ENCODE measurements at regions of chr16 and their contacts with region 1.

Region 1: DNA sequence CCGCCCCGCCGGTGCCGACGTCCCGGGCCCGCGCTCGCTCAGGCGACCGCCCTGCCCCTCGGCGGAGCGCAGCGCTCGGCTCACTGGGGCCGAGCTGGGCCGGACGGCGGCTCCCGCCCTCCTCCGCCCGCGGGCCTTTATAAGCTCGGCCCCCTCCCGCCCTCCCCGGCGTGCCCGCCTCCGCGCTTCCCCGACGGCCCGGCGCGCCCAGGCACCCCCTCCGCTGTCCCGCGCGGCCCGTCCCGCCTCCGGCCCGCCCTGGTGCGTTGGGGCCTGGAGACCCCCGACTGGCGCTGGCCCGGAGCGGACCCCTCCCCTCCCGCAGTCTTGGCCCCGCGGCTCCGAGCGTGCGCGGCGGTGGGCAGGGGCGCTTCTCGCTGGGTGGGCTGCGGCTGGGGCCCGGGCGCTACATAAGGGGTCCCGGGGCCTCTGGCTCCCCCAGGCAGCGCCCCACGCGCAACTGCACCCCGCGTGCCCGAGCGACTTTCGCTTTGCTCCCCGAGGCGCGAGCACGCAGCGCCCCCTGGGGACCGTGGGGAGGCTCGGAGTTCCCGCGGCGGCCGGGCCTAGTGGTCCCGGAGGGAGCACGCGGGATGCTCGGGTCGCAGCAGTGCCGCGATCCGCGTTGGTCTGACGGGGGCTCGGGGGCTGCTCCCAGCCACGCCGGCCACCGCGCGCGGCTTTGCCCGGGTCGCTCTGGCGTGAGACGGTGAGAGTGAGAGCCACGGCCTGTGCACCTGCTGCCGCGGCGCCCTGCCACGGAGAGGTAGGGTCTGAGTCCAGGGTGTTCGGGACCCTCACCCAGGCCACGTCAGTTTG is at the start of gene PIEZO1:
- DNase-seq: peak; percentile 73 to 94 (median 86)
- ATAC-seq: peak; percentile 50
- H3K4me3 ChIP-seq: peak within 1 kb of the TSS; percentile 63
- H3K4me3 Mint-ChIP-seq: peak within 1 kb of the TSS; percentile 89
- H3K27ac ChIP-seq: peak within 1 kb of the TSS; percentile 75 to 77
- H3K27ac Mint-ChIP-seq: peak within 1 kb of the TSS; percentile 55
- H3K4me1 ChIP-seq: peaks cover 57% of the 10 kb centered on the region
- H3K4me1 Mint-ChIP-seq: peaks cover 47% of the 10 kb centered on the region
- H3K27me3 ChIP-seq: no peaks in the 10 kb centered on the region
- H3K27me3 Mint-ChIP-seq: no peaks in the 10 kb centered on the region
- CTCF ChIP-seq: peak; percentile 98
- total RNA-seq, gene PIEZO1: 142 to 146 TPM

Region 2: DNA sequence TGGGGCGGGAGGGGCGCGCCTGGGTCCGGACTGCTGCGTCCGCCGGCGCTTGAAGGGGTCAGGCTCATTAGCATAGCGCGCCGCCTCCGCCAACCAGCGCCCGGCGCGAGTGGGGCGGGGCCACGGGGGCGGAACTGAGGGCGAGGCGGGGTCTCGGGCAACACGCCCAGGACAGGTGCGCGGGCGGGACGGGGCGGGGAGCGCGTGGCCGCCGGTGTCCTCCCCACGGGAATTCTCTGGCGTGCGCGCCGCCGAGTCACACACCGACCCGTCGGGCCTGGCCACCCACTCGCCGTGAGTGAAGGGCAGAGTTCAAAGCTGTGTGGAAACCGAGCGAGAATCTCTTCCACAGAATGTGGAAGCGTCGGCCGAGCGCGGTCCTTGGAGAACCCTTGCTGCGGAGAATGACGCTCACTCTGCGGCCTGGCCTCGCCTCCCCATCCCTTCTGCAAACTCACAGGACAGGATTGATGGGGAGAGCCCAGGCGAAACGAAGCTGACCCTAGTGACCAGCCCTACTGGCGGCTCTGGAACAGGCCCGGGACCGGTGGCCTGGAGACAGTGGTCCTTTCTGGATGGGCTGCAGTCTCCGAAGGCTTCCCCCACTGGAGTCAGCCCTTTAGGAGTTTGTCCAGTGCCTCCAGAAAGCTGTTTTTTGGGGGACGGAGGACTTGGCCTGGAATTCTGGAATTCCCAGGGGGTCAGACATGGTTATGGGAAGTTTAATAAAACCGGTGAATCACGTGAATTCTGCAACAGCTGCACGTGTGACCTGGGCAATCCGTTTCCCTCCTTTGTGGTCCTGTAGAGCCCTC is 98.7 kb before region 1 on chr16 and contains the start of gene SNAI3:
- CTCF ChIA-PET with region 1: interaction called, 3 read pairs
- POLR2A ChIA-PET with region 1: interaction called, 3 read pairs
- intact Hi-C with region 1: loop called in 1 of 2 experiments (anchors 1 kb)
- DNase-seq: peak; percentile 63 to 90 (median 80)
- ATAC-seq: peak; percentile 78
- H3K4me3 ChIP-seq: peak within 1 kb of the TSS; percentile 77
- H3K4me3 Mint-ChIP-seq: peak within 1 kb of the TSS; percentile 87
- H3K27ac ChIP-seq: peak within 1 kb of the TSS; percentile 29 to 56
- H3K27ac Mint-ChIP-seq: peak within 1 kb of the TSS; percentile 80
- H3K4me1 ChIP-seq: peaks cover 80% of the 10 kb centered on the region
- H3K4me1 Mint-ChIP-seq: peaks cover 58% of the 10 kb centered on the region
- H3K27me3 ChIP-seq: no peaks in the 10 kb centered on the region
- H3K27me3 Mint-ChIP-seq: no peaks in the 10 kb centered on the region
- CTCF ChIP-seq: no peak
- total RNA-seq, gene SNAI3: 3.0 to 3.5 TPM

Region 3: GRCh38 chr16:88706288-88706964 is 78.9 kb before region 1 on chr16 and contains the starts of genes CTU2 and RNF166:
- CTCF ChIA-PET with region 1: interaction called, 3 read pairs
- POLR2A ChIA-PET with region 1: interaction called, 16 read pairs
- intact Hi-C with region 1: no loop called
- DNase-seq: peak; percentile 81 to 98 (median 90)
- ATAC-seq: peak; percentile 62
- H3K4me3 ChIP-seq: peak within 1 kb of the TSS; percentile 88
- H3K4me3 Mint-ChIP-seq: peak within 1 kb of the TSS; percentile 99
- H3K27ac ChIP-seq: peak within 1 kb of the TSS; percentile 93 to 96
- H3K27ac Mint-ChIP-seq: peak within 1 kb of the TSS; percentile 100
- H3K4me1 ChIP-seq: peaks cover 56% of the 10 kb centered on the region
- H3K4me1 Mint-ChIP-seq: peaks cover 53% of the 10 kb centered on the region
- H3K27me3 ChIP-seq: no peaks in the 10 kb centered on the region
- H3K27me3 Mint-ChIP-seq: no peaks in the 10 kb centered on the region
- CTCF ChIP-seq: no peak
- total RNA-seq, gene CTU2: 39.3 to 44.0 TPM
- total RNA-seq, gene RNF166: 334 to 355 TPM

Region 4: DNA sequence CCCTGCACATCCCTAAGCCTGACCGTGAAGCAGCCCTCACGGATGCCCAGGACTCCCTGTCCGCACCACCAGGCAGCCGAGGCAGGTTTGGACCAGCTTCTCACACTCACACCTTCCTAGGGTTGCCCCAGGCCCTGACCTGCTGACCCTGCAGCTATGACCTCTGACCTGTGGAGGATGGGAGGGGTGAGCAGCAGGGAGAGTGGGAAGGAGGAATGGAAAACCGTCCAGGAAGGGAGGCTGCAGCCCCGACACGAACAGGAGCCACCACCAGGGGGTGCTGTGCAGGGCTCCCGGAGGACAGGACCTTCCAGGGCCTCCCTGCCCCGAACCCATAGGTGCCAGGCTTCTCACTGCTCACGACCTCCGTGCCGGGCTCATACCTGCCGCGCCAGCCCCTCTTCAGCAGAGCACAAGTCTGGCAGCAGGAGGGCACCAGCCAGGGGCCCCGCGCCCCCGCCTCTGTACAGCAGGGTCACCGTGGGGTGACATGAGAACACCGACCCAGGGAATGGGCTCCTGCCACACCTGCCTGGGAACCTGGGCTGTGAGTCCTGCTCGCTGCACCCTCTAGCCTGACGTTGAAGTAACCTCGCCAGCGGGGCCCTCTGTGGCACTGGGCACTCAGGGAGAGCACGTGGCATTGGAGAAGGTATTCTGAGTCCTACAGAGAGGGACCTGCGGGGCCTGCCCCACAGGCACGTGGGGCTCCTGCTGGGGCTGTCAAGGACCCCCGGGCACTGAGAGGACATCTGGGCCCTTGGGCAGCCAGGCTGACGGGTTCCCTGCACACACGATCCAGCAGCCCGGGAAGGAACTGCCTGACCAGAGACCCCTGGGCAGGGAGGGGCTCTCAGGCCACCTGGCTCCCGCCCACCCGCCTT is 41.4 kb before region 1 on chr16:
- CTCF ChIA-PET with region 1: interaction called, 5 read pairs
- POLR2A ChIA-PET with region 1: interaction called, 15 read pairs
- intact Hi-C with region 1: loop called (anchors 1 to 2 kb)
- DNase-seq: peak; percentile 65 to 88 (median 72)
- ATAC-seq: peak; percentile 51
- H3K4me3 ChIP-seq: no peak overlapping the region
- H3K4me3 Mint-ChIP-seq: no peak overlapping the region
- H3K27ac ChIP-seq: no peak overlapping the region
- H3K27ac Mint-ChIP-seq: peak overlapping the region; percentile 27
- H3K4me1 ChIP-seq: peaks cover 44% of the 10 kb centered on the region
- H3K4me1 Mint-ChIP-seq: peaks cover 24% of the 10 kb centered on the region
- H3K27me3 ChIP-seq: no peaks in the 10 kb centered on the region
- H3K27me3 Mint-ChIP-seq: no peaks in the 10 kb centered on the region
- CTCF ChIP-seq: peak; percentile 95

Region 5: GRCh38 chr16:88803264-88803987 is 18.1 kb after region 1 on chr16 and contains the start of gene CDT1:
- CTCF ChIA-PET with region 1: interaction called, 3 read pairs
- POLR2A ChIA-PET with region 1: interaction called, 7 read pairs
- intact Hi-C with region 1: loop called (anchors 2 kb)
- DNase-seq: peak; percentile 67 to 95 (median 84)
- ATAC-seq: peak; percentile 58
- H3K4me3 ChIP-seq: peak within 1 kb of the TSS; percentile 67
- H3K4me3 Mint-ChIP-seq: peak within 1 kb of the TSS; percentile 92
- H3K27ac ChIP-seq: peak within 1 kb of the TSS; percentile 5 to 50
- H3K27ac Mint-ChIP-seq: peak within 1 kb of the TSS; percentile 86
- H3K4me1 ChIP-seq: peaks cover 39% of the 10 kb centered on the region
- H3K4me1 Mint-ChIP-seq: peaks cover 26% of the 10 kb centered on the region
- H3K27me3 ChIP-seq: no peaks in the 10 kb centered on the region
- H3K27me3 Mint-ChIP-seq: no peaks in the 10 kb centered on the region
- CTCF ChIP-seq: no peak
- total RNA-seq, gene CDT1: 0.47 to 1.0 TPM

Region 6: GRCh38 chr16:88856828-88857733 is 71.8 kb after region 1 on chr16 and contains the starts of genes GALNS and TRAPPC2L:
- CTCF ChIA-PET with region 1: interaction called, 7 read pairs
- POLR2A ChIA-PET with region 1: interaction called, 13 read pairs
- intact Hi-C with region 1: no loop called
- DNase-seq: peak; percentile 97 to 99 (median 98)
- ATAC-seq: peak; percentile 90
- H3K4me3 ChIP-seq: peak within 1 kb of the TSS; percentile 100
- H3K4me3 Mint-ChIP-seq: peak within 1 kb of the TSS; percentile 100
- H3K27ac ChIP-seq: peak within 1 kb of the TSS; percentile 69 to 74
- H3K27ac Mint-ChIP-seq: peak within 1 kb of the TSS; percentile 99
- H3K4me1 ChIP-seq: peaks cover 47% of the 10 kb centered on the region
- H3K4me1 Mint-ChIP-seq: peaks cover 27% of the 10 kb centered on the region
- H3K27me3 ChIP-seq: no peaks in the 10 kb centered on the region
- H3K27me3 Mint-ChIP-seq: peaks cover 3% of the 10 kb centered on the region
- CTCF ChIP-seq: no peak
- total RNA-seq, gene GALNS: 18.4 to 19.7 TPM
- total RNA-seq, gene TRAPPC2L: 48.0 to 48.2 TPM

Measured in CD4-positive, alpha-beta T cell (primary cell).